ENCODE measurements at regions of chr14 and their contacts with region 1.

Region 1: GRCh38 chr14:60648934-60649874 is at the start of gene SIX1:
- DNase-seq: peak; percentile 88 to 89
- ATAC-seq: peak; percentile 33 to 45
- H3K4me3 ChIP-seq: peak within 1 kb of the TSS; percentile 86 to 90 (median 88)
- H3K27ac ChIP-seq: peak within 1 kb of the TSS; percentile 93 to 98 (median 95)
- H3K4me1 ChIP-seq: peaks cover 31 to 38% of the 10 kb centered on the region in 2 donors
- H3K27me3 ChIP-seq: no peaks in the 10 kb centered on the region
- CTCF ChIP-seq: no peak
- POLR2A ChIP-seq: peak; percentile 97 to 99
- total RNA-seq, gene SIX1: 28.3 to 76.4 (median 56.3) TPM

Region 2: DNA sequence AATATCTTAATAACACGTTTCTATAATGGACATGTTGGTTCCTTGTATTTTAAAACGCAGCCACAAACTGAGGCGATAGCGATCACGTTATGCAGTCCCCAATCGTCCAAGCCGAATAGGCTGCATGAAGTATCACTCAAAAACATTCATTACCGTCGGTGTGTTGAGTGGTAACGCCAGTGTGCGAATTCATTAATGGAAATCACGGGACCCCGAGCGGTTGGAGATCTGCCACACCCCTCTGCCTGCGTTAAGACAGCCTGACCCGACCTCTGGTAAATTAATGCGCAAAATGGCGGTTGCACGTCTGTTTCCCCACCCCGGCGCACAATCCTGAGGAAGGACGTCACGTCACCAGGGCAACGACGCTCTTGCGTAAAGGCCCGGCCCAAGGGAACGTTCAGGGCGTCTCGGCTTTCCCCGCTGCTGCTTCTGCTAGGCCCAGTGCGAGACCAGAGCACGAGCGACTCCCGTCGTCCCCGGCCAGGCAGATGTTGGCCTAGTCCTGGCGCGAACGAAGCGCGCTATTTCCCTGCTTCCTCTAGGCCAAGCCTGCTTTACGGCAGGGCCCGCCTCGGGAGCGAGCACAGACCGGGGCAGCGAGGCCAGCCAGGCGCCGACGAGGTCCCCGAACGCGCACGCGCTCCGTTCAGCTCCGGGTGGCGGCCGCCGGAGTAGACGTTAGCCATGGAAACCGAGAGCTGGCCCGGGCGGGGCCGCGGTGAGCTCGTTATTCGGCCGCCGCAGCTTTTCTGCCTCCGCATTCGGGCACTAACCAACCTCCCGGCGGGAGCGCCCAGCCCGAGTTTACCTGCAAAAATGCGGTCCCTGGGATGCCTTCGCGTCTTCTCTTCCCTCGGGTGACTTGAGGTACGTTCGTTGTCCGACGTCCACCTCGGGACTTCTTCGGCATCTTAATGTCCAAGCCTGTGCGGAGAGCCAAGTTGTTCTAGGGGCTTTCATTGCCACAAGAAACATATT is 557.4 kb before region 1 on chr14 and contains the start of gene PCNX4:
- in situ Hi-C with region 1: no loop called
- intact Hi-C with region 1: loop called (anchors 5 kb)
- DNase-seq: peak; percentile 97 to 98
- ATAC-seq: peak; percentile 89 to 91
- H3K4me3 ChIP-seq: peak within 1 kb of the TSS; percentile 71 to 86 (median 73)
- H3K27ac ChIP-seq: peak within 1 kb of the TSS; percentile 88 to 99 (median 96)
- H3K4me1 ChIP-seq: peaks cover 36 to 41% of the 10 kb centered on the region in 2 donors
- H3K27me3 ChIP-seq: no peaks in the 10 kb centered on the region
- CTCF ChIP-seq: peak in 1 of 5 experiments; percentile 12
- POLR2A ChIP-seq: peak; percentile 92 to 96
- total RNA-seq, gene PCNX4: 11.3 to 42.8 (median 34.8) TPM

Region 3: GRCh38 chr14:60248697-60249318 is 400.4 kb before region 1 on chr14 and contains the start of gene PPM1A:
- in situ Hi-C with region 1: no loop called
- intact Hi-C with region 1: loop called (anchors 10 kb)
- DNase-seq: peak; percentile 90 to 96
- ATAC-seq: peak; percentile 77 to 80
- H3K4me3 ChIP-seq: peak within 1 kb of the TSS; percentile 77 to 90 (median 88)
- H3K27ac ChIP-seq: peak within 1 kb of the TSS; percentile 97 to 100 (median 100)
- H3K4me1 ChIP-seq: peaks cover 35 to 38% of the 10 kb centered on the region in 2 donors
- H3K27me3 ChIP-seq: no peaks in the 10 kb centered on the region
- CTCF ChIP-seq: peak in 1 of 5 experiments; percentile 21
- POLR2A ChIP-seq: peak; percentile 83 to 95
- total RNA-seq, gene PPM1A: 81.2 to 107 (median 86.1) TPM

Region 4: GRCh38 chr14:60594062-60594461 is 55.1 kb before region 1 on chr14:
- in situ Hi-C with region 1: no loop called
- intact Hi-C with region 1: no loop called
- DNase-seq: no peak
- ATAC-seq: no peak
- H3K4me3 ChIP-seq: no peak overlapping the region
- H3K27ac ChIP-seq: no peak overlapping the region
- H3K4me1 ChIP-seq: no peaks in the 10 kb centered on the region
- H3K27me3 ChIP-seq: no peaks in the 10 kb centered on the region
- CTCF ChIP-seq: no peak
- POLR2A ChIP-seq: no peak

Region 5: DNA sequence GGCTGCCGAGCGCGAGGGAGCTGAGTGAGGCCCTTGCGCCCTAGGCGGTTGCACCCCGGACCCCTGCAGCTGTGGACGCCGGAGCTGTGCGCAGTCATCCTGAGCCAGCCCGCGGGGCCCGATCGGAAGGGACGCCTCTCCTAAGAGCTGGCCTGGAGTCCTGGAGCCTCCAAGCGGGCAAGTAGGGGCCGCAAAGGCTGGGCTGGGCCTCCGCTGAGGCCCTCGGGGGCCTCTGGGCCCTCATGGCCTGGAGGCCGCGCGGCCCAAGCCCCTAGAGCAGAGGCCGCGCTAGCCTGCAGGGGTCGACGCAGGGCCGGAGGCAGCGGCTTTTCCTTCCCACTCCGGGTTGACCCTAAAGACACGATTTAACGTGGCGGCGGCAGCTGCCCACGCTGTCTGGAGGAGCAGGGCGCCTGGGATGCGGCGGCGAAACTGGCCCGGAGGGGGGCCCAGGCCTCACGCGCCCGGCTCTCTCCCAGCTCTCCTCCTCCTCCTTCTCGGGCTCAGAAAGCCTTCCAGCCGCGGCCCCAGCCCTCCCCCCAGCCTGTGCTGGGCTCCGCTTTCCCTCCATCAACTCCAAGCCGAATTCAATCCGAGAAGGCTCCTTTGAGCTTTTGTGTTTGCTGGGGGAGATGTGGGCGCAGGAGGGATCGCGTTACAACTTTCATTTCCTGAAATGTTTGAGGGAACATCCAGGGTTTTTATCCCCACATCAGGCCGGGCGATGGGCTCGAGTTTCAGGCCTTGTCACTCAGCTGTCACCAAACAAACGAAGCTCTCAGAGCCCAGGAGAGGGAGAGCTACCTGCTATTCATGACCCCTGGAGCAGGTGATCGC is 11.5 kb before region 1 on chr14:
- in situ Hi-C with region 1: no loop called
- intact Hi-C with region 1: loop called (anchors 2 kb)
- DNase-seq: peak in 1 of 2 donors; percentile 40
- ATAC-seq: peak; percentile 37 to 48
- H3K4me3 ChIP-seq: peak overlapping the region; percentile 57 to 69 (median 62)
- H3K27ac ChIP-seq: peak overlapping the region; percentile 93 to 98 (median 95)
- H3K4me1 ChIP-seq: peaks cover 44 to 52% of the 10 kb centered on the region in 2 donors
- H3K27me3 ChIP-seq: no peaks in the 10 kb centered on the region
- CTCF ChIP-seq: peak in 1 of 5 experiments; percentile 13
- POLR2A ChIP-seq: no peak

Region 6: DNA sequence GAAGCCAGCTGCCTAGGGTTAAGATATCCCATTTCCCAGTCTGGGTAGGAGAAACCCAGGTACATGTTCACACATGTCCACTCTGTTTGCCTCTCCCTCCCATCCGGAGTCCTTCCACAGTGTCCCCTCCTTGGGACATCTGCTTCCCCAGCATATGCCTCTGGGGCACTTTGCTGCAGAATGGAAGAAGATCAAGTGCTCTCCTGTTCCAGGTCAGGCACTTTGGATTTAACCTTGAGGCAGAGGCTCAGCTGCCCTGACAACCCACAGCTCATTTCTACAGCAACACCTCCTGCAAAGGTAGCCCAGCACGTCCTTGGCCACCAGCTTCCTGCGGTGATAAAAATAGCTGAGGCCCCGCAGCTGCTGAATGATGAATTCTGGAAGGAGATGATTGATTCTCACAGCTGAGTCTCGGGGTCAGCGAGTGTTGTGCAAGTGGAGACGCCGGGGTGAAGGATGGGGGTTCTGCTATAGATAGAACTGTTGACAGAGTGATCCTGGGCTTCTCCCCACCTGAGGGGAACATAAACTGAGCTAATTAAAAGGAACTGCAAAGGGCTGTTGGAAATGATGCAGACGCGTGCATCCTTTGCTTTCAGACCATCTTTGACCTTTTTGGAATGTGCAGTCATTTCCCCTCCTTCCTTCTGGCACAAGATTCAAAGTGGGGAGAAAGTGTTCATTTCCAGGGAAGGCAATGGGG is 476.8 kb after region 1 on chr14:
- in situ Hi-C with region 1: no loop called
- intact Hi-C with region 1: loop called (anchors 1 kb)
- DNase-seq: peak; percentile 87 to 96
- ATAC-seq: peak; percentile 48 to 50
- H3K4me3 ChIP-seq: peak overlapping the region; percentile 1 to 31 (median 17)
- H3K27ac ChIP-seq: peak overlapping the region; percentile 94 to 99 (median 98)
- H3K4me1 ChIP-seq: peaks cover 70 to 75% of the 10 kb centered on the region in 2 donors
- H3K27me3 ChIP-seq: no peaks in the 10 kb centered on the region
- CTCF ChIP-seq: no peak
- POLR2A ChIP-seq: no peak